ENCODE measurements at regions of chr13 and their contacts with region 1.

Region 1: DNA sequence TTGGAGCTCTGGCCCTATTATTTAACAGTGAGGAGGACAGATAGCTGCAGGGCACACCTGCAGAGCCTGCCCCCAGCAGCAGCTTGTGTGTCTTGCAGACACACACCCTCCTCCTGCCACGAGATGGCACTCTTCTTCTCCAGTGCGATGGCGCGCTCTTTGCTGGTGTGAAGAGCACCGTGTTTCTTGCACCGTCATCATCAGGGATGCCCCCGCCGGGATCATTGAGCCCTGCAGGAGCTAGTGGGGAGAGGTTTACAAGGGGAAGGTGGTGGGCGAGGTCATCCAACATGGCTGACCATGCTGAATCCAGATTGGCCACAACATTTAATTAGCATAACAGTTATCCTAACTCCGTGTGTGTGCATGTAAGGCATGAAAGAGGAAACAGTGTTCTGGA is 105.6 kb downstream of the RAB20 start:
- DNase-seq: peak; percentile 81 to 90
- H3K4me3 ChIP-seq: no peak overlapping the region
- H3K27ac ChIP-seq: peak overlapping the region; percentile 11 to 47
- H3K4me1 ChIP-seq: peaks cover 0 to 4% (median 0%) of the 10 kb centered on the region in 4 donors
- H3K27me3 ChIP-seq: no peaks in the 10 kb centered on the region
- CTCF ChIP-seq: peak; percentile 73 to 84

Region 2: DNA sequence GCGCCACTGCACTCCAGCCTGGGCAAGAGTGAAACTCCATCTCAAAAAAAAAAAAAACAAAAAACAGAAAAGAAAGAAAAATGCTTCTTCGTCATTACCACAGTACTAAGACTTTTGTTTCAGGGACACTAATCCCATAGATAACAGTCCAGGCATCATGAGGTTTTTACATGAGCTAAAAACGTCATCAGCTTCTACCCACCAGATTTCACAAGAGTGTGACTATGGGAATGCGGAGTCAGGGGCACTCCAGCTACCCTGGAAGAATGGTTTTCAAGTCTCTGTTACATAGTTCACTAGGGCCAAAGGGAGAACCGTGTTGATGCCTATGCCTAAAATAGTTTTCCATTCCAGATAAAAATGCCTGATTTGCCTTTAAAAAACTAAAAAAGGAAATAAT is 72.4 kb after region 1 on chr13:
- intact Hi-C with region 1: loop called (anchors 2 kb)
- DNase-seq: peak in 1 of 2 donors; percentile 83
- H3K4me3 ChIP-seq: no peak overlapping the region
- H3K27ac ChIP-seq: peak overlapping the region; percentile 83 to 90
- H3K4me1 ChIP-seq: peaks cover 15 to 74% (median 63%) of the 10 kb centered on the region in 4 donors
- H3K27me3 ChIP-seq: no peaks in the 10 kb centered on the region
- CTCF ChIP-seq: no peak

Region 3: GRCh38 chr13:110644892-110645521 is 189.1 kb after region 1 on chr13:
- intact Hi-C with region 1: loop called (anchors 10 kb)
- DNase-seq: peak; percentile 47 to 88
- H3K4me3 ChIP-seq: no peak overlapping the region
- H3K27ac ChIP-seq: peak overlapping the region; percentile 24 to 53
- H3K4me1 ChIP-seq: peaks cover 0 to 30% (median 22%) of the 10 kb centered on the region in 4 donors
- H3K27me3 ChIP-seq: no peaks in the 10 kb centered on the region
- CTCF ChIP-seq: peak; percentile 29 to 46

Region 4: DNA sequence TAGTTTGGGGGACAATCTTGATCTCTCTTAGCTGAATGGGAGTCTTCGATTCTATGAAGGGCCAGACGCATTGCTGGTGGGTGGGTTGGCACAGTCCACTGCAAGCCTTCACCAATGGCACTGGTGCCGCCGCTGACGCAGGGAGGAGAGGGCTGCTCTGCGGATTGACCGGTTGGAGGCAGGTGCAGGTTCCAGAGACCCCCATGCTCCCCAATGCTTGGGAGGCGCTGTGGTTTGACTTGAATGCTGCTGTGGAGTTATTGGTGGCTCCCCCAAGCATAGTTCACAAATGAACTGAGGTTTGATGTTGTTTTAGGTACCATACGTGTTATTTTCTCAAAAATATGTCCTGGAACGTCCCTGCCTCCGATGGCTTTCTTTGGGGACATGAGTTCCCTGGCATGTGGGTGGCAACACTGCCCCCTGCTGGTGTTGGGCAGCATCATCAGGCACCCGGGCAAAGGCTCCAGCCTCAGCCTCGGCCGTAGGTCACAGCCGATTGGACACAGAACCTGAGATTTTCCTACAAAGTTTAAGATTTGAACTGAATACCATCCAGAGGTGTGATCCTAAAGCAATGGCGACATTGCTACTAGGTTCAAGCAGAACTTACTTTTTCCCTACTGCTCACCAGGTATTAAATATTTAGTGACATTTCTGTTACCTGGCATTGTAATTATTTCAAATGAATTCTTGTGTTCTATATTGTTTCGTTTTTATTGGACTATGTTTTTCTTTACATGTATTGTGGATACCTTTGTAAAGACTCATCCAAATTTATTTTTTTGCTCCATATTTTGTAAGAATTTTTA is 363.5 kb after region 1 on chr13:
- intact Hi-C with region 1: loop called (anchors 10 kb)
- DNase-seq: peak; percentile 76 to 87
- H3K4me3 ChIP-seq: no peak overlapping the region
- H3K27ac ChIP-seq: no peak overlapping the region
- H3K4me1 ChIP-seq: peaks cover 0 to 4% (median 4%) of the 10 kb centered on the region in 4 donors
- H3K27me3 ChIP-seq: no peaks in the 10 kb centered on the region
- CTCF ChIP-seq: peak; percentile 97

Measured in tibial artery (tissue), 4 donors.